Heart right ventricle (tissue), 16 donors: ENCODE measurements at regions of chr19 and their contacts with region 1.

Region 1: DNA sequence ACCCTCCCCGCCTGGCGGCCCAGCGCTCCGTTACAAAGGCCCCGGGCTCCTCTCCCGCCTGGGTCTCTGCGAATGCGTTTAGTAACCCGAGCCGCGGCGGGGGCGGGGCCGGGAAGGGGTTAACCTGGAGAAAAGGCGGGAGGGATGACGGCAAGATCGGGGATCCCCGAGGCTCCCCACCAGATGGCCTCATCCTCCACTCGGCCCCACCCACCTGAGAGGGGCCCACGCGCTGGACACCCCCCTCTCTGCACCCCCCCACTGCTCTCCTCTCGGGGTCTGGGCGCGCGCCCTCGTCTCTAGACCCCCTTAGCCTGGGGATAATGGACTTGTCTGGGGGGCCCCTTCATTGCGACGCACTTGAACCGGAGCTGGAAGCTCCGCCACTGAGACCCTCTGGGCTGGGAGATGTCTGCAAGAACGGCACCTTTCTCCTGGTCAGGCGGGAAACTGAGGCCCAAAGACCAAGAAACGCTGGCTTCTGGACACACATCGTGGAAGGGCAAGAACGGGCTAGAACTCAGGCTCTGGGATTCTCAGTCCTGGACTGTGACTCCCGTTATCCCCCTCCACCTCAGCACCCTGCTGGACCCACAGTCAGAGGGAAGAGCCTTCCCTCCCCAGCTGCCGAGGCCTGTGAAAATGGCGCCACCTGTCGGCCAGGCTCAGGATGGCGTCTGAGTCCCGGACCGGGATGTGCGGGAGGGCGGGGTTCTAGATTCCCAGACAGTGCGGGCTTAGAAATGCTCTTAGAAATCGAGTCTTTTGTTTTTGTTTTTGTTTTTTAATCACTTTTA is 2.9 kb upstream of the LTBP4 start:
- DNase-seq: peak; percentile 90
- ATAC-seq: peak; percentile 59 to 82 (median 68)
- H3K4me3 ChIP-seq: peak overlapping the region in 7 of 10 donors; percentile 8 to 81 (median 50)
- H3K27ac ChIP-seq: peak overlapping the region in 5 of 10 donors; percentile 41 to 96 (median 94)
- H3K4me1 ChIP-seq: peaks cover 24 to 64% (median 60%) of the 10 kb centered on the region in 9 donors
- H3K27me3 ChIP-seq: peaks cover 0 to 70% (median 29%) of the 10 kb centered on the region in 7 donors
- CTCF ChIP-seq: peak; percentile 95 to 100 (median 98)

Region 2: DNA sequence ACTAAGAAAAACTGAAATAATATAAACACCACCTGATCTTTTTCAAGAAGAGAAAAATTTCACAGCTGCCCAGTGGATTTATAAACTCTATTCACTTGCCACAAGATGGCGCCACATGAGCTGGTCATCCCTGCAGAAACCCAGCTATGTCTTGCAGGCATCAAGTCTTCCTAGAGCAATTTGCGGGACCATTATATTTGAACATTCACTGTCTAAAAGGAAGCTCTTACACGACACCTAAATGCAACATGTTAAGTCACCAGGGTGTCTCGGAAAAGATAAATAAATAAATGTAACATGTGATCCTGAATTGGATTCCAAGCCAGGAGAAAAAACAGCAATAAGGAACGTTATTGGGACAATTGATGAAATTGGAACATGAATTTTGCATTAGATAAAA is 292.9 kb before region 1 on chr19:
- intact Hi-C with region 1: loop called in 7 of 10 experiments (anchors 2 to 10 kb)
- DNase-seq: peak; percentile 62 to 85
- ATAC-seq: peak; percentile 67 to 90 (median 79)
- H3K4me3 ChIP-seq: no peak overlapping the region
- H3K27ac ChIP-seq: no peak overlapping the region
- H3K4me1 ChIP-seq: peaks cover 0 to 4% (median 0%) of the 10 kb centered on the region in 9 donors
- H3K27me3 ChIP-seq: no peaks in the 10 kb centered on the region
- CTCF ChIP-seq: peak; percentile 59 to 87 (median 81)

Region 3: GRCh38 chr19:40529093-40529954 is 69.0 kb before region 1 on chr19:
- intact Hi-C with region 1: loop called (anchors 1 to 5 kb)
- DNase-seq: peak; percentile 81 to 86
- ATAC-seq: peak; percentile 86 to 96 (median 90)
- H3K4me3 ChIP-seq: peak overlapping the region in 9 of 10 donors; percentile 44 to 65 (median 59)
- H3K27ac ChIP-seq: peak overlapping the region in 2 of 10 donors; percentile 55 to 72
- H3K4me1 ChIP-seq: peaks cover 0 to 14% (median 9%) of the 10 kb centered on the region in 9 donors
- H3K27me3 ChIP-seq: peaks cover 0 to 17% (median 0%) of the 10 kb centered on the region in 7 donors
- CTCF ChIP-seq: peak; percentile 94 to 98 (median 96)

Region 4: GRCh38 chr19:40542202-40542859 is 56.0 kb before region 1 on chr19:
- intact Hi-C with region 1: loop called in 4 of 10 experiments (anchors 5 kb)
- DNase-seq: peak; percentile 76 to 86
- ATAC-seq: peak; percentile 77 to 92 (median 86)
- H3K4me3 ChIP-seq: no peak overlapping the region
- H3K27ac ChIP-seq: peak overlapping the region in 1 of 10 donors; percentile 40
- H3K4me1 ChIP-seq: peaks cover 0 to 22% (median 0%) of the 10 kb centered on the region in 9 donors
- H3K27me3 ChIP-seq: peaks cover 0 to 4% (median 0%) of the 10 kb centered on the region in 7 donors
- CTCF ChIP-seq: peak in 2 of 9 donors; percentile 6 to 18

Region 5: GRCh38 chr19:40549007-40549708 is 49.2 kb before region 1 on chr19:
- intact Hi-C with region 1: loop called in 5 of 10 experiments (anchors 1 to 5 kb)
- DNase-seq: peak; percentile 37 to 66
- ATAC-seq: peak in 5 of 8 donors; percentile 33 to 77 (median 67)
- H3K4me3 ChIP-seq: no peak overlapping the region
- H3K27ac ChIP-seq: no peak overlapping the region
- H3K4me1 ChIP-seq: peaks cover 0 to 6% (median 0%) of the 10 kb centered on the region in 9 donors
- H3K27me3 ChIP-seq: peaks cover 0 to 57% (median 34%) of the 10 kb centered on the region in 7 donors
- CTCF ChIP-seq: peak in 8 of 9 donors; percentile 9 to 58 (median 52)

Region 6: DNA sequence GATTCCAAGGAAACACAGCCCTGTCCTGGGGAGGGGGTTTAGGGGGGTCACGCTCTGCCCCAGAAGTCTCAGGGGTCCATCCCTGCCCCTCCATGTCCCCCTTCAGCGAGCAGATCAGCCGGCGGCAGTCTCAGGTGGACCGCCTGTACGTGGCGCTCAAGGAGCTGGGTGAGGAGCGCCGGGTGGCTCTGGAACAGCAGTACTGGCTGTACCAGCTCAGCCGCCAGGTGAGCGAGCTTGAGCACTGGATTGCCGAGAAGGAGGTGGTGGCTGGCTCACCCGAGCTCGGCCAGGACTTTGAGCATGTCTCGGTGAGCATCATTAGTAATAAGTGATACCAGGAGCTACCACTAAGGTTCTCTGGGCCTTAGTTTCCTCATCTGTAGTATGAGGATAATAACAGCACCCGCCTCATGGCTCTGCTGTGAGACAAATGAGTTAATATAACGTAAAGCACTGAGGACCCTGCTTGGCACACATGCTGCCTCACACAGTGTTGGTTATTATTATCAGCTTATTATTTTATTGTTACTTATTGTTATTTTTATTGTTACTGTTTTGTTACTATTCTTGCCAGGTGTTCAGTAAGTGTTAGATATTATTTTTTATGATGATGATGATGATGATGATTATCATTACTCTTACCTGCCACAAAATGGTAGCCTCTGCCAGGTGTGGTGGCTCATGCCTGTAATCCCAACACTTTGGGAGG is 42.2 kb before region 1 on chr19:
- intact Hi-C with region 1: loop called in 1 of 10 experiments (anchors 5 kb)
- DNase-seq: no peak
- ATAC-seq: no peak
- H3K4me3 ChIP-seq: no peak overlapping the region
- H3K27ac ChIP-seq: no peak overlapping the region
- H3K4me1 ChIP-seq: no peaks in the 10 kb centered on the region
- H3K27me3 ChIP-seq: peaks cover 0 to 55% (median 33%) of the 10 kb centered on the region in 7 donors
- CTCF ChIP-seq: no peak

Region 7: DNA sequence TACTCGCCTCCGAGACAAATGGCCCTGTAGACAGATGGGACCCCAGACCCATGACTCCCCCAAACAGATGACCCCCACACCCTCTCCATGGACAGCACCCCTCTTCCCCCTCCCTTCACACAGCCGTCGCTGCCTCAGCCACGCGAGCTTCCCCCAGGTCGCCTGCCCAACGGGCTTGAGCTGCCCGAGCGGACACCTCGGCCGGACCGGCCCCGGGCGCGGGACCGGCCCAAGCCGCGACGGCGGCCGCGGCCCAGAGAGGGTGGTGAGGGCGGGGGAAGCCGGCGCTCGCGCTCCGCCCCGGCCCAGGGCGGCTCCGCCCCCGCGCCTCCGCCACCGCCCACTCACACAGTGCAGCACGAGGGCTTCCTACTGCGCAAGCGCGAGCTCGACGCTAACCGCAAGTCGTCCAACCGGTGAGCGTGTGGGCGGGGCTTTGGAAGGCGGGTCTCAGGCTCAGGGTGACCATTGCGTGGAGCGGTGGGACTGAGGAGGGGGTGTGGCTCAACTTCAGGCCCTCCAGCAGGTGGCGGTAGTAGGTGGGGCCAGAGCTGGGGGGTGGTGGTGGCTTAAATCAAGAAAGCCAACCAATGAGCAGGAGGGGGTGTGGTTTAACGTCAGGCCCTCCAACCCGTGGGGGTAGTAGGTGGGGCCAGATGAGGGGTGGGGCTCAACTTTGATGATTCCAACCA is 27.9 kb before region 1 on chr19:
- intact Hi-C with region 1: loop called in 1 of 10 experiments (anchors 2 kb)
- DNase-seq: peak; percentile 99
- ATAC-seq: peak; percentile 96 to 98 (median 98)
- H3K4me3 ChIP-seq: peak overlapping the region in 8 of 10 donors; percentile 12 to 53 (median 46)
- H3K27ac ChIP-seq: peak overlapping the region in 3 of 10 donors; percentile 10 to 47 (median 34)
- H3K4me1 ChIP-seq: peaks cover 4 to 16% (median 10%) of the 10 kb centered on the region in 9 donors
- H3K27me3 ChIP-seq: peaks cover 6 to 37% (median 31%) of the 10 kb centered on the region in 7 donors
- CTCF ChIP-seq: peak in 4 of 9 donors; percentile 10 to 57 (median 28)